Left lung (tissue), 14 donors: ENCODE measurements at regions of chr2 and their contacts with region 1.

Region 1: GRCh38 chr2:197804049-197804757 is at the start of gene PLCL1:
- DNase-seq: peak; percentile 85 to 96 (median 94)
- ATAC-seq: peak; percentile 99
- H3K4me3 ChIP-seq: peak within 1 kb of the TSS; percentile 71 to 79
- H3K27ac ChIP-seq: peak within 1 kb of the TSS; percentile 50 to 67
- H3K4me1 ChIP-seq: peaks cover 4 to 22% of the 10 kb centered on the region in 2 donors
- H3K27me3 ChIP-seq: peaks cover 0 to 23% of the 10 kb centered on the region in 2 donors
- CTCF ChIP-seq: no peak
- polyA plus RNA-seq, gene PLCL1: 7.9 to 15.3 (median 11.9) TPM

Region 2: DNA sequence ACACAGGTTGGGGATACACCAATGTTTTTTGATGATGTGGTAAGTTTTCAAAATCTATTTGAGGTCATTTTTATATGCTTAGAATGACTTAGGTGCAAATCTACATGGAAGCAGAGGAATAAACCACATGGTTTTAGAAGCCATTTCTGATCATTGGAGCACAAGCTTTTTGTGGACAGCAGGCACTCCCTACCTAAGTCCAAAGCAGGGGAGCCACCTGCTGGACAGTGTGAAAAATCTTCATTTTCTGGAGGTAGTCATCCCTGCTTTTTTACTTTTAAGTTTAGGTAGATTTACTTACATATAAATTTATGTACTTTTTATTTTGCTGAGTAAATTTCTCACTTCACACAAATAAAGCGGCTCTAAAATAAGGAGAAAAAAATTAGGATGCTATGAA is 323.4 kb after region 1 on chr2:
- intact Hi-C with region 1: loop called in 1 of 2 experiments (anchors 5 kb)
- DNase-seq: peak in 3 of 4 donors; percentile 25 to 68 (median 35)
- ATAC-seq: peak; percentile 86
- H3K4me3 ChIP-seq: no peak overlapping the region
- H3K27ac ChIP-seq: no peak overlapping the region
- H3K4me1 ChIP-seq: no peaks in the 10 kb centered on the region
- H3K27me3 ChIP-seq: no peaks in the 10 kb centered on the region
- CTCF ChIP-seq: peak; percentile 52 to 54

Region 3: GRCh38 chr2:198173242-198173641 is 369.0 kb after region 1 on chr2:
- intact Hi-C with region 1: no loop called
- DNase-seq: no peak
- ATAC-seq: no peak
- H3K4me3 ChIP-seq: no peak overlapping the region
- H3K27ac ChIP-seq: no peak overlapping the region
- H3K4me1 ChIP-seq: no peaks in the 10 kb centered on the region
- H3K27me3 ChIP-seq: no peaks in the 10 kb centered on the region
- CTCF ChIP-seq: no peak

Region 4: GRCh38 chr2:198296665-198297308 is 492.6 kb after region 1 on chr2:
- intact Hi-C with region 1: loop called in 1 of 2 experiments (anchors 5 kb)
- DNase-seq: peak in 2 of 4 donors; percentile 68 to 84
- ATAC-seq: peak; percentile 84
- H3K4me3 ChIP-seq: no peak overlapping the region
- H3K27ac ChIP-seq: no peak overlapping the region
- H3K4me1 ChIP-seq: no peaks in the 10 kb centered on the region
- H3K27me3 ChIP-seq: no peaks in the 10 kb centered on the region
- CTCF ChIP-seq: peak; percentile 68 to 79